ENCODE measurements at regions of chr4 and their contacts with region 1.

Region 1: GRCh38 chr4:140839888-140840790 is 84.0 kb upstream of the TBC1D9 start:
- DNase-seq: no peak
- CTCF ChIP-seq: no peak

Region 2: DNA sequence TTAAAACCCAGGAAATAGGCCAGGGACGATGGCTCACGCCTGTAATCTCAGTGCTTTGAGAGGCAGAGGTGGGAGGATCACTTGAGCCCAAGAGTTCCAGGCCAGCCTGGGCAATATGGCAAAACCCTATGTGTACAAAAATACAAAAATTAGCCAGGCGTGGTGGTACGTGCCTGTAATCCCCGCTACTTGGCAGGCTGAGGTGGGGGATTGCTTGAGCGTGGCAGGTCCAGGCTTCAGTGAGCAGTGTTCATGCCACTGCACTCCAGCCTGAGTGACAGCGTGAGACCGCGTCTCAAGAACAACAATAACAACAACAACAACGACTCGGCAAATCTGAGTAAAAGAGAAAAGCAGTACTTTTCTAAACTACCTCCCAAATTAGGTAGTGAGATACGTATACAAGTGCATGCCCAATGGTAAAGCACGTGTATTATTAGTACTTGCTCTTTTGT is 1524.9 kb before region 1 on chr4:
- in situ Hi-C with region 1: no loop called
- DNase-seq: peak; percentile 51
- CTCF ChIP-seq: no peak

Region 3: DNA sequence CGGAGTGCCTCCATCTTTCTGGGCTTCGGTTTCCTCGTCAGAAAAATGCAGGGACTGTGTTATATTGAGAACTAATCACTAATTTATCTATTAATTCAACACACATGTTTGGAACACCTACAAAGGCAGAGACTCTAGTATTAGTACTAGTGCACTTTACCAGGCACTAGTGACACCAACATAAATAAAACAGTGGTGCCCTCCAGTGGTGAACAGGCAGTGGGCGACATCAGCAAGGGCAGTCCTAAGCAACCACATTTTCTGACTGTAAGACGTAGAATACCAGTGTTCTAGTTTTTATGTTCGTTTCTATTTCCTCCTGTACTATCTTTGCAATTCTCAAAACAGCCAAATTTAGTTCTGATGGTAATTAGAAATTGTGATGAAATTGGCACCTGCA is 202.3 kb before region 1 on chr4:
- in situ Hi-C with region 1: loop called (anchors 10 kb)
- DNase-seq: peak; percentile 63
- CTCF ChIP-seq: peak; percentile 35

Region 4: DNA sequence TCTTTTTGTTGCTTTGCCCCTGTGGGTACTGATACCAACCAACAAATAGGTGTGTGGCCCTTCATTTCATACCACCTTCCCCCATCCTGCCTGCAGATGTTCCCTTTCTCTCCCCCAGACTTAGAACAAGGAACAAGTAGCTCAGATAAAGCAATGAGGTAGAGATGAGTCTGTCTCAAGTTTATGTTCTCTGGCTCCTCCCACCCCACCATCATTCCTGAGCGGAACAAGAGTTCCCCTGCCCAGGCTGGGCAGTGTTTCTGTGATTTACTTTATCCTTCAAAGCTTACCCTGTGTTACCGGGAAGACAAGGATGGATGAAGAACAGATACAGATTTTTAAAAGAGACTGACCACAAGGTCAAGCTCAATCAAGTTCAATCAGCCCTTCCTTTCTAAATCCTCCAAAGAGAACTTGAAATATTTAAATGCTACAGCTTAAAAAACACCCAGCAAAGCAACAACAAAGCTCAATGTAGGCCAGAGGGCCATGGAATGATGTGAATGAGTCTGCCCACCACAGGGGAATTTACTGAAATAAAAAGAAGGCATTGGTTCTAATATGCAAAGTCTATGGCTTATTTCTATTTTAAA is 191.3 kb before region 1 on chr4:
- in situ Hi-C with region 1: no loop called
- DNase-seq: no peak
- CTCF ChIP-seq: no peak

Region 5: GRCh38 chr4:141192564-141192963 is 352.4 kb after region 1 on chr4:
- in situ Hi-C with region 1: no loop called
- DNase-seq: no peak
- CTCF ChIP-seq: no peak